K562 (cell line): ENCODE measurements at regions of chr6 and their contacts with region 1.

Region 1: DNA sequence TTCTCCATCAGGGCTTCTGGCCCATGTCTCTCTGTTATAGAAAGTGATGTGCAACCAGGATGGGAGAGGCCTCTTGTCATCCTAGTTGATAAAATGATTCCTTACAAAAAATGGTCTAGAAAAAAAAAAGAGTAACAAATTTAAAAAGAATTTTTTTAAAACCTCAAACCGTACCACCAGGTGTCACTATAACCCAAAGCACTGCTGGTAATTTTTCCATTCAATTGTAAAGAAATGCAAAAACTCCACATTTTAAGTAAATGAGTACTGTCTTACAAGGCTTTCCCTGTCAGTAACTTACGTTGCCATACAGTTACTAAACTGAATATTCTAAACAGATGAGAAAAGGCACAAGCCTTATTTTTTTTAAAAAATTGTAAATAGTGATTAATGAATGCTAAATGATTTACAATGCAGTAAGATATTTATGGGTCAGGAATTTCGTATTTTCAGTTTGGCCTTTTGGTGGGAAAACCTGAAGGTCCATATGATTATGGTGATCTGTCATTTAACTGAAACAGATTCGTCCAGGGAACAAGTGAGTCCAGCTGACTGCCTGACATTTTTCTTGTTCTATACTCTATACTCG is 95.4 kb downstream of the OGFRL1 start:
- DNase-seq: peak in 3 of 4 experiments; percentile 8 to 27 (median 11)
- ATAC-seq: no peak
- H3K4me3 ChIP-seq: no peak overlapping the region
- H3K27ac ChIP-seq: no peak overlapping the region
- H3K4me1 ChIP-seq: no peaks in the 10 kb centered on the region
- H3K27me3 ChIP-seq: no peaks in the 10 kb centered on the region
- CTCF ChIP-seq: peak; percentile 34 to 66 (median 37); a peak in 3 of 6 replicates
- EP300 ChIP-seq: no peak
- POLR2A ChIP-seq: no peak
- RAD21 ChIP-seq: peak; percentile 28 to 59

Region 2: GRCh38 chr6:71533939-71534379 is 150.0 kb after region 1 on chr6:
- CTCF ChIA-PET with region 1: no interaction called
- POLR2A ChIA-PET with region 1: no interaction called
- in situ Hi-C with region 1: no loop called
- intact Hi-C with region 1: loop called (anchors 10 kb)
- DNase-seq: peak; percentile 13 to 27 (median 20)
- ATAC-seq: no peak
- H3K4me3 ChIP-seq: no peak overlapping the region
- H3K27ac ChIP-seq: no peak overlapping the region
- H3K4me1 ChIP-seq: no peaks in the 10 kb centered on the region
- H3K27me3 ChIP-seq: no peaks in the 10 kb centered on the region; a peak in 1 of 5 replicates
- CTCF ChIP-seq: peak in 2 of 3 experiments; percentile 26 to 52; a peak in 3 of 6 replicates
- EP300 ChIP-seq: no peak
- POLR2A ChIP-seq: no peak
- RAD21 ChIP-seq: peak; percentile 44 to 57

Region 3: DNA sequence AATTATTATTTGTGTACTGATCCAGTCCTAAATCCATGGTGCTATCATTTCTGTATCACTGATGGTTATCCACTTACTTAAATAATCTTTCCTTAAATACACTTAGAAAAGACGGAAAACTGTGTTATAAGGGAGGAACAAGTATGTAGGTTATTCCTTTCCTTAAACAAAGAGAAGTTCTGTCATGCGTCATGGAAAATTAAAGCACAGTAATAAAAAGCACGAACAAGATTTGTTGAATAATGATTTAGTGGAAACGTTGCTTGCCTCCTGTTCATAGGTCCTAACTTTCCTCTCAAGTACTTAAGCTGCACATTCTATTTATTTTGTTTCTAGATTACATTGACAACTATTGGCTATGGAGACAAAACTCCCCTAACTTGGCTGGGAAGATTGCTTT is 1720.9 kb after region 1 on chr6:
- CTCF ChIA-PET with region 1: no interaction called
- POLR2A ChIA-PET with region 1: no interaction called
- in situ Hi-C with region 1: no loop called
- intact Hi-C with region 1: no loop called
- DNase-seq: no peak
- ATAC-seq: no peak
- H3K4me3 ChIP-seq: no peak overlapping the region
- H3K27ac ChIP-seq: no peak overlapping the region
- H3K4me1 ChIP-seq: no peaks in the 10 kb centered on the region; a peak in 1 of 5 replicates
- H3K27me3 ChIP-seq: no peaks in the 10 kb centered on the region
- CTCF ChIP-seq: no peak
- EP300 ChIP-seq: no peak
- POLR2A ChIP-seq: no peak
- RAD21 ChIP-seq: no peak